Activated B cell treated with CpG ODN at 0.5 μM for 24 hours (primary cell): ENCODE measurements at regions of chr12 and their contacts with region 1.

Region 1: DNA sequence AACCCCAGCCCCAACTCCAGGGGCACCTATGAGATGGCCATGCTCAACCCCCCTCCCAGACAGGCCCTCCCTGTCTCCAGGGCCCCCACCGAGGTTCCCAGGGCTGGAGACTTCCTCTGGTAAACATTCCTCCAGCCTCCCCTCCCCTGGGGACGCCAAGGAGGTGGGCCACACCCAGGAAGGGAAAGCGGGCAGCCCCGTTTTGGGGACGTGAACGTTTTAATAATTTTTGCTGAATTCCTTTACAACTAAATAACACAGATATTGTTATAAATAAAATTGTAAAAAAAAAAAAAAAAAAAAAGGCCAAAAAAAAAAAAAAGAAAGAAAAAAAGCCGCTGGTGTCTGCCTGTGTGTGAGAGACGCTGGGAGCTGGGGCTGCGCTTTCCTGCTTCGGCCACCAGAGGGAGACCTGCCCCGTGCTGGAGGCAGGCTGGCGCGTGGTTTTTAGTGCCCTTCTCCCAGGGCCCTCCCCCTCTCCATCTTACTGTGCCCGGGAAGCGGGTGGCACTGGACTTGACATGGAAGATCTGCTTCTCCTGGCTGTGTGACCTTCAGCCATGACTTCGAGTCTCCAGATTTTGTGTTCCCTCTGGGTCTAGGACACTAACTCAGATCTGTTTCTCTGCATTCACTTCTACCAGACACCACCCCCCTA is 3.4 kb upstream of the NXPH4 start:
- DNase-seq: peak; percentile 75
- ATAC-seq: peak; percentile 49
- H3K4me3 Mint-ChIP-seq: peak overlapping the region; percentile 13
- H3K27ac Mint-ChIP-seq: peak overlapping the region; percentile 47
- H3K4me1 Mint-ChIP-seq: peaks cover 44% of the 10 kb centered on the region
- H3K27me3 Mint-ChIP-seq: peaks cover 13% of the 10 kb centered on the region
- CTCF ChIP-seq: peak; percentile 30

Region 2: GRCh38 chr12:57229634-57230380 is 16.6 kb after region 1 on chr12 and contains the start of gene SHMT2:
- CTCF ChIA-PET with region 1: interaction called, 390 read pairs
- POLR2A ChIA-PET with region 1: interaction called, 65 read pairs
- intact Hi-C with region 1: loop called (anchors 1 kb)
- DNase-seq: peak; percentile 76
- ATAC-seq: peak; percentile 56
- H3K4me3 Mint-ChIP-seq: peak within 1 kb of the TSS; percentile 98
- H3K27ac Mint-ChIP-seq: peak within 1 kb of the TSS; percentile 97
- H3K4me1 Mint-ChIP-seq: peaks cover 86% of the 10 kb centered on the region
- H3K27me3 Mint-ChIP-seq: peaks cover 3% of the 10 kb centered on the region
- CTCF ChIP-seq: no peak
- total RNA-seq, gene SHMT2: 268 and 270 TPM in 2 replicates

Region 3: GRCh38 chr12:57238854-57239554 is 25.8 kb after region 1 on chr12:
- CTCF ChIA-PET with region 1: interaction called, 390 read pairs
- POLR2A ChIA-PET with region 1: interaction called, 175 read pairs
- intact Hi-C with region 1: loop called (anchors 1 kb)
- DNase-seq: peak; percentile 96
- ATAC-seq: peak; percentile 54
- H3K4me3 Mint-ChIP-seq: peak overlapping the region; percentile 89
- H3K27ac Mint-ChIP-seq: peak overlapping the region; percentile 90
- H3K4me1 Mint-ChIP-seq: peaks cover 94% of the 10 kb centered on the region
- H3K27me3 Mint-ChIP-seq: peaks cover 8% of the 10 kb centered on the region
- CTCF ChIP-seq: peak; percentile 99

Region 4: DNA sequence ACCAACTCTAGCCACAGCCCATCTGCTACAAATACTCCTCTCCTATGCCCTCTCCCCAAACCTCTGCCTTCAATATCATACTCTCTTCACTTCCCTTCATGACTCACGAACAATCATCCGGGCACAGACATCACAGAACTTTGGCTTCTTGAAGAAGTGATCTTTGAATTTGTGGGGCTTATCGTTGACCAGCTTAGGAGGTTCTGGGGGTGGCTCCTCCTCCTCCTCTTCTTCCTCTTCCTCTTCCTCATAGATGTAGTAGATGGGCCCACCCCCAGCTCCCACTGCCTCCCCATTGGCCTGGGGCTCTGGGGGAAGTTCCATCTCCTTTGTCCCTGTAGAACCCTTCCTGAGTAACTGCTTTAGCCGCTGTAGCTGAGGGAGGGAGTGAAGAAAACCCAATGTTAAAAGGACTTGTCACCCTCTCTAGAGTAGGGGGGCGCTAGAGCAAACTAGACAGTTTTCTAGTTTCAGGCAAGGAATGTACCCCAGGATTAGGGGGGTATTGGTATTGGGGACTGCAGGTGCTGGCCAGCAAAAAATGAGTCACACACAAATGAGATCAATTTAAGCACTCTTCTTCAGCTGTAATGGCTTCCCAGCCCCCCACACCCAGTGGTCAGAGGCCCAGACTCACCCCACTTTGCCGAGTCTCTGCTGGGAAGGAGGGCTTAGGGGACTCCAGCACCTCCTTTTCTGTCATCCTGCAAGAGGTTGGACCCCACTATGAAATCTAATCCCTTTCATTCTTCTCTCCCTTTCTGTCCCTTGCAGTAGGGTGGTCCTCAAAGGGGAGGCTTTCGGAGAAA is 36.0 kb after region 1 on chr12:
- CTCF ChIA-PET with region 1: interaction called, 390 read pairs
- POLR2A ChIA-PET with region 1: interaction called, 9 read pairs
- intact Hi-C with region 1: no loop called
- DNase-seq: no peak
- ATAC-seq: peak; percentile 21
- H3K4me3 Mint-ChIP-seq: peak overlapping the region; percentile 29
- H3K27ac Mint-ChIP-seq: no peak overlapping the region
- H3K4me1 Mint-ChIP-seq: peaks cover 10% of the 10 kb centered on the region
- H3K27me3 Mint-ChIP-seq: peaks cover 3% of the 10 kb centered on the region
- CTCF ChIP-seq: no peak